Esophagus squamous epithelium (tissue), 5 donors: ENCODE measurements at regions of chr11 and their contacts with region 1.

Region 1: DNA sequence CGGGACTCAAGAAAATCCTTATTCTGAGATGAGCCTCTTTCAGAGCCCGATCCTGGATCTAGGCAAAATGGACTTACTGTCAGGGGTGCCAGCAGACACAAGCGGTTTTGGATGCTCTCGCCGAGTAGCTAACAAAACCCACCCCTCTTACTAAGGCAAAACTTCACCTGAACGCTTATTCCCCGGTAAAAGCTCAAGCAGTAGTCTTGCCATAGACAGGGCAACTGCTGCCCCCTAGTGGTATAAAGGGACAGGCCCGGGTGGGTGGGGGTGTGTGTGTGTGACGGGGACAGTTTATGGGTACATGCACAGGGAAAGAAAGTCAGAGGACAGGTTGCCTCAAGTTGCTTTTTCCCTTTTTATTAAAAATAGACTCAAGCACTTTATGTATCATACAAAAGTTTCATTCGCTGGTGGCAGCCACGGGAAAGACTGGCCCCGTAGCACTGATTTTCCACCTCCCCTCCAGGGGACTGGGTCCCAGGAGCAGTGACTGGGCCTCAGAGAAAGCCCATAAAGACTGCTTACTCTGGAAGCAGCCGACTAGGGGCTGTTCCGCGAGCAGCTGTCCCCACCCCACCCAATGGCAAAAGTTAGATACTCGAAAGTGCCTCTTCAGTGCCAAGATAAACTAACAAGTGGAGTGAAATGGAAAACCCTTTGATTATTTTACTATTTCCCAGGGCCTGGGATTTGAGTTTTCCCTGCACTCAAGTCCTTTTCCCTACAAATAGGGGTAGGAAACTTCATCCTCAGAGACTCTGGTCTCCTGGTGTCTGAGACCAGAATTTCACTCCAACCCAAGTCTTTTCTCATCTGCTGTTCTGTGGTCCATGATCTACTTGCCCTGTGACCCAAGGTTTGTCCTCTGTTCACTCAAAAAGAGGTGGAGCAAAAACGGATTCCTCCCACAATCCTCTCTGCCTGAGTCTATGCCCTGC is 4.7 kb downstream of the YPEL4 start:
- DNase-seq: no peak
- H3K4me3 ChIP-seq: no peak overlapping the region
- H3K27ac ChIP-seq: peak overlapping the region in 3 of 4 donors; percentile 51 to 66 (median 52)
- H3K4me1 ChIP-seq: peaks cover 36 to 72% (median 50%) of the 10 kb centered on the region in 3 donors
- H3K27me3 ChIP-seq: peaks cover 7 to 46% (median 14%) of the 10 kb centered on the region in 4 donors
- CTCF ChIP-seq: peak; percentile 66 to 92 (median 82)
- POLR2A ChIP-seq: no peak

Region 2: GRCh38 chr11:57456960-57457642 is 187.9 kb before region 1 on chr11:
- intact Hi-C with region 1: no loop called
- DNase-seq: peak; percentile 24
- H3K4me3 ChIP-seq: peak overlapping the region in 1 of 4 donors; percentile 72
- H3K27ac ChIP-seq: no peak overlapping the region
- H3K4me1 ChIP-seq: peaks cover 37 to 46% (median 40%) of the 10 kb centered on the region in 3 donors
- H3K27me3 ChIP-seq: peaks cover 0 to 55% (median 3%) of the 10 kb centered on the region in 4 donors
- CTCF ChIP-seq: peak; percentile 93 to 99 (median 98)
- POLR2A ChIP-seq: no peak

Region 3: DNA sequence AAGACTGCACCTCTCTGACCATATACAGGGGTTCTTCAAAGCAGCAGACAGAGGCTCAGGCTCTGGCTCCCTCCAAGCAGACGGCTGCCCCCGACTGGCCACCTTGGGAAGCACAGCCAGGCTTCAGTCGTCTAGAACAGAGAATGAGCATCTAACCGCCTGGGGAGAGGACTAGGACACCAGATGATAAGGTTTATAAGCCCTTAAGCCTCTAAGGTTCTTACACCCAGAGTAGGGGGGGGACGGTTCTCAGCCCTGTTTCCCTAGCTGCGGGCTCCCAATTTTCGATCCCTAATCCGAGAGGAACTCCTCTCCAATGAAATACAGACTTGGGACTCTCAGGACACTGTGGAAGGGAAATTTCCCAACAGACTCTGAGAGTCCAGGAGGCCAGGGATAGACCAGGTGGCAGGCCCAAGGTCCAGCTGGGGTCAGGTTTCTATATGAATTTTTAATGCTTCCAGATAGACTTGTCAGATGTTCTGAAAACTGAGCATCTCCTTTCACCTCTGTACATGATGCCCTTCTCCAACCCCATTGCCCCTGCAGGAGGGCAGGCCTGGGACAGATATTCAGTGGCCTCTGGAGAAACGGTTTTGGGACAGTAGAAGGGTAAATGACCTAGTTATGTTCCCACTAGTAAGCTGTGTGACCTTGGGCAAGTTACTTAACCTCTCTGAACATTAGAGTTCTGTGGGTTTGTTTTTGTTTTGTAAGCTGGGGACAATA is 164.4 kb before region 1 on chr11:
- intact Hi-C with region 1: loop called (anchors 5 kb)
- DNase-seq: no peak
- H3K4me3 ChIP-seq: no peak overlapping the region
- H3K27ac ChIP-seq: no peak overlapping the region
- H3K4me1 ChIP-seq: peaks cover 30 to 53% (median 36%) of the 10 kb centered on the region in 3 donors
- H3K27me3 ChIP-seq: peaks cover 5 to 63% (median 10%) of the 10 kb centered on the region in 4 donors
- CTCF ChIP-seq: peak; percentile 28 to 76 (median 64)
- POLR2A ChIP-seq: no peak

Region 4: DNA sequence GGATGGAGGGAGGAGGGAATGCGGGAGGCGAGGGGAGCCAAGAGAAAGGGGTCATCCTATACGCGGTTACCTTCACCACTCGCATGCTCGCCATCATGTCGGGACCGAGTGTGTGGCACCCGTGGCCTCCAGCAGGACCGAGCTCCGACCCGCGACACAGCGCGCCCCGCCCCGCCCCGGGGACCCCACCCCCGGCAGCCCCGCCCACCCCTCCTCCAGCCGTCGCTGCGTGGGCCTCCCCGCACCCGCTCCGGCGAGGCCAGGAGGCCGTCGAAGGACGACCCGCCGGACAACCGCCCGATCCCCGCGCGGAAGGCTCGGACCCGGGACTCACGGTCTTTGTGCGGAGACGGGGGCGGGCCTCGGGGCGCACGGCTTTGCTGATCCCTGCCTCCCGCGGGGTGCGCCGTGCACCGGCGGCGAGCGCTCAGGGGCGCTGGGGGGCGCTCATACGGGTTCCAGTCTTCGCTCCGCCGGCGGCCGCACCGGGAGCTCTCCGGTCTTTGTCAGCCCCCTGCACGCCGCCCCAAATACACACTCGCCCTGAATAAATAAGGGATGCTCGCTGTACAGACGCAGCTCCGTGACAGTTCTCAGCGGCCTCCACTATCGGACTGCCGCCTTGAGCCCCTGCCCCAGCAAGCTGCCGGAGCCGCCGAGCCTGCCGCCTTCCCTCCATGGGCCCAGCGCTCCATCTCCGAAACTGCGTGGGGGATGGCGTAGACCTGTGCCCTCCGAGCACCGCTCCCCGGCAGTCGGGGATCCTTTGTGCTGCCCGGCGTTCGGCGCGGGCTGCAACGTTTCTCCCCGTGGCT is 77.3 kb before region 1 on chr11 and contains the start of gene UBE2L6:
- intact Hi-C with region 1: loop called (anchors 5 kb)
- DNase-seq: peak; percentile 21
- H3K4me3 ChIP-seq: peak within 1 kb of the TSS; percentile 73 to 97 (median 84)
- H3K27ac ChIP-seq: peak within 1 kb of the TSS; percentile 84 to 93 (median 90)
- H3K4me1 ChIP-seq: peaks cover 7 to 49% (median 28%) of the 10 kb centered on the region in 3 donors
- H3K27me3 ChIP-seq: no peaks in the 10 kb centered on the region
- CTCF ChIP-seq: peak in 2 of 6 experiments; percentile 93 to 94
- POLR2A ChIP-seq: no peak
- total RNA-seq, gene UBE2L6: 11.0 to 46.4 (median 22.0) TPM